ENCODE measurements at regions of chr12 and their contacts with region 1.

Region 1: GRCh38 chr12:19186722-19187661 is 57.5 kb downstream of the PLEKHA5 start:
- DNase-seq: no peak
- ATAC-seq: no peak
- H3K4me3 Mint-ChIP-seq: no peak overlapping the region
- H3K27ac Mint-ChIP-seq: no peak overlapping the region
- H3K4me1 Mint-ChIP-seq: peaks cover 6% of the 10 kb centered on the region
- H3K27me3 Mint-ChIP-seq: no peaks in the 10 kb centered on the region

Region 2: DNA sequence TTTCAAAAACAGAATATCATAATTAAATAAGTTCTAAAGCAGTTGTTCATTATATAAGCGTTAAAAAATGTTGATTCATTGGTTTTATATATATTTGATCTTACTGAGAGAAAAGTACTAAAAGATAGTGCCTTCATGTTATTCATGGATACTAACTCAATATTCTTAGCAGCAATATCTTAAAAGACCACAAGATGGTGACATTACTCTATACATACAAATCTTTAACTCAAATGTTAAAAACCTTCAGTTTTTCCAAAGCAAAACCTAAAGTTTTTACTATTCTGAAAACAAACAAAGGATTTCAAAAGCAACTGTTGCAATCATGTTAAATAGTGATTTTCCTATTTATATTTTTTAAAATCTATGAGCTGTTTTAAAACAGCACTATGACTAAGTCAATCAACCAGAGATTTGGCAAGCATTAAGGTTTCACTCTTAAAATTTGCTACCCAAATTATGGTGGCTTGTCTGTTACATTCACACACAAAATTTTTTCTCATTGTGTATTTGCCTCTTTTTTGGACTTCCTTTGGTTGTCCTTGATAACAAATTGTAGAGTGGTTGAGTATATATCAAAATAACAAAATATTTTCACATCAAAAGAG is 1046.9 kb before region 1 on chr12:
- CTCF ChIA-PET with region 1: interaction called, 3 read pairs
- POLR2A ChIA-PET with region 1: no interaction called
- intact Hi-C with region 1: loop called in 1 of 2 experiments (anchors 5 kb)
- DNase-seq: no peak
- ATAC-seq: no peak
- H3K4me3 Mint-ChIP-seq: no peak overlapping the region
- H3K27ac Mint-ChIP-seq: no peak overlapping the region
- H3K4me1 Mint-ChIP-seq: no peaks in the 10 kb centered on the region
- H3K27me3 Mint-ChIP-seq: no peaks in the 10 kb centered on the region

Region 3: DNA sequence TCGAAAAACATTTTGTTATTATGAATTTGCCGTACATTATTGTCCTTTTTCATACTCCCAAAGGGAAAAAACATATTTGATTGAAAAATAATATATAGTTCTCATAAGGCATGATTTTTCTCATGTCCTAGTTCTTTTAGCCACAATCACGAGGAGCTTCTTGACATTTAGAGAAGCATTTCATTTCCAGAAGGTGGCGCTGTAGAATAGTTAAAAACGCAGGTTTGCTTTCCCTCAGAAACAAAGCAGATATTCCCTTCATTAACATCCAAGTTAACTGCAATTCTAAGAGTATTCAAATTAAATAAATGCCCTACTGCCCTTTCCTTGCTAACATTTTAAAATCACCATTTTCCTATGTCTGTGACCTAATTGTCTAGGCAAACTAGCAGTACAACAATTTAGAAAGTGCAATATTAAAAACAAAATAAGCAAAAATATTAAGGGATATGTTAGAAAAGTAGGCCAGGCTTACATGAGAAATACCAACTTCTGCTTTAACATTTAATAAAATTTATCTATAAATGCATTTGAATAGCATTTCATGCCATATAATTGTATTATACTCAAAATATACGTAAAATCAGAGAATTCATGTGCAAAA is 936.6 kb before region 1 on chr12:
- CTCF ChIA-PET with region 1: interaction called, 8 read pairs
- POLR2A ChIA-PET with region 1: no interaction called
- intact Hi-C with region 1: loop called (anchors 1 to 5 kb)
- DNase-seq: no peak
- ATAC-seq: no peak
- H3K4me3 Mint-ChIP-seq: no peak overlapping the region
- H3K27ac Mint-ChIP-seq: no peak overlapping the region
- H3K4me1 Mint-ChIP-seq: no peaks in the 10 kb centered on the region
- H3K27me3 Mint-ChIP-seq: no peaks in the 10 kb centered on the region

Region 4: GRCh38 chr12:18430425-18431048 is 756.5 kb before region 1 on chr12:
- CTCF ChIA-PET with region 1: interaction called, 7 read pairs
- POLR2A ChIA-PET with region 1: no interaction called
- intact Hi-C with region 1: loop called in 1 of 2 experiments (anchors 10 kb)
- DNase-seq: peak; percentile 11
- ATAC-seq: no peak
- H3K4me3 Mint-ChIP-seq: no peak overlapping the region
- H3K27ac Mint-ChIP-seq: no peak overlapping the region
- H3K4me1 Mint-ChIP-seq: no peaks in the 10 kb centered on the region
- H3K27me3 Mint-ChIP-seq: no peaks in the 10 kb centered on the region

Region 5: GRCh38 chr12:18861287-18861858 is 325.6 kb before region 1 on chr12:
- CTCF ChIA-PET with region 1: interaction called, 10 read pairs
- POLR2A ChIA-PET with region 1: no interaction called
- intact Hi-C with region 1: loop called (anchors 1 kb)
- DNase-seq: no peak
- ATAC-seq: no peak
- H3K4me3 Mint-ChIP-seq: no peak overlapping the region
- H3K27ac Mint-ChIP-seq: no peak overlapping the region
- H3K4me1 Mint-ChIP-seq: no peaks in the 10 kb centered on the region
- H3K27me3 Mint-ChIP-seq: no peaks in the 10 kb centered on the region

Region 6: DNA sequence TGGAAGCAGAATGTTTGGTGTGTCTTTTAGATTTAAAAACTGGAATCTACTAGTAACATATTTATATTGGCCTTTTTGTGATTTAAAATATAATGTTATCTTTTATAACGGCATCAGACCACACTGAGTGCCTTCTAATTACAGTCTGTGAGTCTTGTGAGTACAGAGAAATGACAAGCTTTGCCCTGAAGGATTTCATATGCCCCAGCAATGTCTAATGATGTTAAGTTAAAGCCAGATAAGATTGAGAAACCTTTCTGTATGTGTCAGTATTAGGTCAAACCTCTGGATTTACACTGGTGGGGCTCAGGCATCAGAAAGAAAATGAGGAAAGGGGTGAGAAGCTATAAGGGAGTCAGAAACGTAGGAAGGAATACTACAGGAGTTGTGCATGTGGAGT is 32.3 kb before region 1 on chr12:
- CTCF ChIA-PET with region 1: no interaction called
- POLR2A ChIA-PET with region 1: no interaction called
- intact Hi-C with region 1: no loop called
- DNase-seq: no peak
- ATAC-seq: no peak
- H3K4me3 Mint-ChIP-seq: no peak overlapping the region
- H3K27ac Mint-ChIP-seq: no peak overlapping the region
- H3K4me1 Mint-ChIP-seq: no peaks in the 10 kb centered on the region
- H3K27me3 Mint-ChIP-seq: no peaks in the 10 kb centered on the region

Region 7: DNA sequence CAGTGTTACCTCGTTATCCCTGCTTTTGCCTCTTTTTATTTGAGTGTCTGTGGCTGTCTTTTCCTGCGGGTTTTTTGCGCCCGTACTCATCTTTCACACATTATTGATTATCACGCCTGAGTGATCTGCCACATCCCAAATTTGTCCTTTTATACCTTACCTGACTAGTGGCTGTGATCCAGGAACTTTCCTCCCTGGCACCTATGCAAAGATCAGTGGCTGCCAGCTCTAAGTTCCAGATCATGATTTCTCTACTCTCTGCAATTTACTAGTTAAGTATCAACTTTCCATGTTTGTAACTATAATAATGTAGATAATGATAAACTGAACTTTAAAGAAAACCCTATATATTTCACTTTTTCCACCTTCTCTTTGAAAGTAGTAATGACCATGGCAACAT is 20.6 kb before region 1 on chr12:
- CTCF ChIA-PET with region 1: interaction called, 12 read pairs
- POLR2A ChIA-PET with region 1: no interaction called
- intact Hi-C with region 1: no loop called
- DNase-seq: no peak
- ATAC-seq: no peak
- H3K4me3 Mint-ChIP-seq: no peak overlapping the region
- H3K27ac Mint-ChIP-seq: no peak overlapping the region
- H3K4me1 Mint-ChIP-seq: peaks cover 4% of the 10 kb centered on the region
- H3K27me3 Mint-ChIP-seq: no peaks in the 10 kb centered on the region

Region 8: DNA sequence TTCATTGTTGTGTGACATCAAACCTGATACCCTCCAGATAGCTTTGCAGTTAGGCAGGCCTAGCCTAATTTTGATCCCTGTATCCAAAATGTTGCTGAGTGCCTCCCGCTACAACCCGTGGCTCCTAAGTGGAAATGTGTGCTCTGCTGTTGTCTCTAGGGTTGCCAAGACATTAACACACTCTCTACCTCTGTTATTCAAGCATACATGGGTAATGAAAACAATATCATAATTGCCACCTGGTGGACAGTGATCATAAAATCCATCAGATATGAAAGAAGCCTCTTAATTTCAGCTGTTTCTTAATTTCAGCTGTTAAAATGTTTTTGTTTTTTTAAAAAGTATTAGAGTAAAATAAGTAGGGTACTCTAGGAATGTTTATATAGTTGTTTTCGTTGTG is 36.0 kb after region 1 on chr12:
- CTCF ChIA-PET with region 1: no interaction called
- POLR2A ChIA-PET with region 1: no interaction called
- intact Hi-C with region 1: no loop called
- DNase-seq: no peak
- ATAC-seq: no peak
- H3K4me3 Mint-ChIP-seq: no peak overlapping the region
- H3K27ac Mint-ChIP-seq: no peak overlapping the region
- H3K4me1 Mint-ChIP-seq: peaks cover 2% of the 10 kb centered on the region
- H3K27me3 Mint-ChIP-seq: no peaks in the 10 kb centered on the region